ENCODE measurements at regions of chr9 and their contacts with region 1.

Region 1: GRCh38 chr9:104863180-104863883 is 64.6 kb downstream of the ABCA1 start:
- DNase-seq: peak; percentile 78
- H3K4me3 ChIP-seq: no peak overlapping the region
- H3K27ac ChIP-seq: no peak overlapping the region
- H3K4me1 ChIP-seq: peaks cover 3% of the 10 kb centered on the region
- H3K27me3 ChIP-seq: no peaks in the 10 kb centered on the region
- CTCF ChIP-seq: peak; percentile 81
- POLR2A ChIP-seq: no peak

Region 2: DNA sequence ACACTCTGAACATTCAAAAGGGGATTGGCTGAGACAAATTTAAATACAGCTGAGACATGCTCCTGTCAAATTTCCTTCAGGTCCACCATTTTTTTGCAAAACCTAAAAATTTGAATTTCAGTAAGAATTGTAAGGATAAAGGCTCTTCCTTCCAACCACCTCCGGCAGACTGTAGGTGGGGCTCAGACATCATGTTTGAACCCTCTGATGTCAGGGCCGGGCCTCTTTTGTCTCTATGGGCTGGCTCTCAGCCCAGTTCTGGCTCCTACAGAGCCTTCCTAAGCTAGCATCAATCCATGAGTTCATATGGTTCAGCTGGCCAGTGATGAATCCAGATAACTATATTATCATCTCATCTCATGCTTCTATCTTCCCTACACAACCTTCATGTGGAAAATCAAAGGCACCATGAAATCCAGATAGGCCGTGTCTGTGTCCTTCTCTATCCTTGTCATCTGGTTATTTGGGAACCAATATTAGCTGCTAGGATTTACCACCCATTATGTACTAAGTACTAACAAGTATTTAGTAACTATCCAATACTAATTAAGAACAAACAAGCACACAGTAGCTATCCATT is 55.2 kb before region 1 on chr9:
- CTCF ChIA-PET with region 1: interaction called, 4 read pairs
- POLR2A ChIA-PET with region 1: no interaction called
- dilution Hi-C with region 1: no loop called
- intact Hi-C with region 1: loop called (anchors 1 kb)
- DNase-seq: peak; percentile 46
- H3K4me3 ChIP-seq: no peak overlapping the region
- H3K27ac ChIP-seq: no peak overlapping the region
- H3K4me1 ChIP-seq: no peaks in the 10 kb centered on the region
- H3K27me3 ChIP-seq: no peaks in the 10 kb centered on the region
- CTCF ChIP-seq: peak; percentile 24 to 48
- POLR2A ChIP-seq: no peak

Region 3: GRCh38 chr9:104850786-104851545 is 12.4 kb before region 1 on chr9:
- CTCF ChIA-PET with region 1: interaction called, 13 read pairs
- POLR2A ChIA-PET with region 1: no interaction called
- dilution Hi-C with region 1: no loop called
- intact Hi-C with region 1: loop called (anchors 1 kb)
- DNase-seq: peak; percentile 75
- H3K4me3 ChIP-seq: no peak overlapping the region
- H3K27ac ChIP-seq: no peak overlapping the region
- H3K4me1 ChIP-seq: peaks cover 17% of the 10 kb centered on the region
- H3K27me3 ChIP-seq: no peaks in the 10 kb centered on the region
- CTCF ChIP-seq: no peak
- POLR2A ChIP-seq: no peak

Region 4: DNA sequence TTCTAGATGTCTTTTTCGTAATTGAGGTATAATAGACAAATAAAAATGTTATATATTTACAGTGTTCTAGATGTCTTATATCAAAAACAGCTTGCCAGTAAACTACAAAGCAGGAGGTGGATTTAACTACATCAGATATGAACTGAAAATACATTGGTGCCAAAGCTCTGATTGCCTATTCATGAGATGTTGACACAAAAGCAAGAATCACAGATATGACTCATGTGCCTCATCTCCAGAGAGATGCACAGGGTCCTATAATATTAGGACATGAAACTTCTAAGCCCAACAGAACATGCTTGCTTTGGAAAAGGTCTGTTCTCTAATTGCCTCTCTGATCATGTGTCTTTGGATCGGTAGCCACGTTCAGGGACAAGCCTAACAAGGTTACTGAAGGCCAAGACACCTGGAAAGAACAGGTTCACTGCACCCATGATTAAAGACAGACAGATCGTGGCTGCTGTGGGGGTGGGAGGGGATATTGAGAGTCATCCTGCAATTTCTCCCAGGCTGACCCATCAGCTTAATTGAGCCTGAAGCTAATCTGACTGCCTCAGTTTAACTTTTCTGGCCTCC is 47.8 kb after region 1 on chr9:
- CTCF ChIA-PET with region 1: interaction called, 15 read pairs
- POLR2A ChIA-PET with region 1: no interaction called
- dilution Hi-C with region 1: no loop called
- intact Hi-C with region 1: no loop called
- DNase-seq: no peak
- H3K4me3 ChIP-seq: no peak overlapping the region
- H3K27ac ChIP-seq: no peak overlapping the region
- H3K4me1 ChIP-seq: no peaks in the 10 kb centered on the region
- H3K27me3 ChIP-seq: peaks cover 7 to 18% of the 10 kb centered on the region in 2 experiments
- CTCF ChIP-seq: no peak
- POLR2A ChIP-seq: no peak

Region 5: DNA sequence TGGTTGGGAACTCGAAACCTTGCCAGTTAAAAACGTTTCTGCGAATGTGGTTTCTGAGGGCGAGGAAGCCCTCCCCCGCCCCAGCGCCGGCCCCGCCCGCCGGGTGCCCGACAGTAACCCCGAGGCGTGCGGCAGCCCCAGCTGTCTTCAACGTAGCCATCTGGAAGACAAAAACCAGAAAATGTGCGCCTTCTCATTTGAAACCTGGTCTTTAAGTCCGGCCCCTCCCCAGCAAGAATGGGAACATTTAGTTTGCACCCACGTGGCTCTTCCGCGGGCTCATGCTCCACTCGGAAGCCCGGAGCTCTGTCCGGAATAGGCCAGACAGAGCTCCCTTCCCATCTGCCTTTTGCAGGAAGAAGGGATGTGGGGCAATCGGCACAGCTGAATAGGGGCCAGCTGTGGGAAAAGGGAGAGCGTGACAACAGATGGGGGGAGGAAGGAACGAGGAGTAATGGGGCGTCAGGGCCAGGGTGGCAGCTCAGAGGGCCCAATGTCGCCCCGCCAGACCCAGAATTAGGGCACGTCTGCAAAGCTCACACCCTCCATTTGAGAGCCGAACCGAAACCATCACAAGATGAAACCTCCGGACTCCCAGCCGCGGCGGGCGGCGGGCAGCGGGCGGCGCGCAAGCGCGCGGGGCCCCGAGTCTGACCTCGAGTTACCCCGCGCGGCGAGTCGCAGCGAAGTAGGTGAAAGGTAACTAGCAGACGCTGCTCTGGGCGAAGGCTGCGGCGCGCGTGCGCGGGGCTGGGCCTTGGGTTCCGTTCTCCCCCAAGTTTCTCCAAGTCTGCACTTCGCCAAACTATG is 128.0 kb after region 1 on chr9:
- CTCF ChIA-PET with region 1: interaction called, 9 read pairs
- POLR2A ChIA-PET with region 1: no interaction called
- dilution Hi-C with region 1: no loop called
- intact Hi-C with region 1: loop called (anchors 2 kb)
- DNase-seq: peak; percentile 83
- H3K4me3 ChIP-seq: peak overlapping the region; percentile 61 to 83 (median 76)
- H3K27ac ChIP-seq: peak overlapping the region; percentile 34
- H3K4me1 ChIP-seq: peaks cover 4% of the 10 kb centered on the region
- H3K27me3 ChIP-seq: no peaks in the 10 kb centered on the region
- CTCF ChIP-seq: no peak
- POLR2A ChIP-seq: peak; percentile 50

Region 6: GRCh38 chr9:105414947-105415661 is 551.8 kb after region 1 on chr9:
- CTCF ChIA-PET with region 1: interaction called, 20 read pairs
- POLR2A ChIA-PET with region 1: no interaction called
- dilution Hi-C with region 1: no loop called
- intact Hi-C with region 1: loop called (anchors 1 kb)
- DNase-seq: peak; percentile 51
- H3K4me3 ChIP-seq: no peak overlapping the region
- H3K27ac ChIP-seq: no peak overlapping the region
- H3K4me1 ChIP-seq: no peaks in the 10 kb centered on the region
- H3K27me3 ChIP-seq: no peaks in the 10 kb centered on the region
- CTCF ChIP-seq: peak; percentile 70 to 72
- POLR2A ChIP-seq: no peak